ENCODE measurements at regions of chr2 and their contacts with region 1.

Region 1: GRCh38 chr2:207334624-207335371 is 169.1 kb upstream of the KLF7 start:
- DNase-seq: no peak
- H3K4me3 Mint-ChIP-seq: peak overlapping the region; percentile 26
- H3K27ac Mint-ChIP-seq: peak overlapping the region; percentile 93
- H3K4me1 Mint-ChIP-seq: peaks cover 74% of the 10 kb centered on the region
- H3K27me3 Mint-ChIP-seq: no peaks in the 10 kb centered on the region

Region 2: GRCh38 chr2:207223051-207223450 is 111.7 kb before region 1 on chr2:
- intact Hi-C with region 1: loop called (anchors 1 kb)
- DNase-seq: no peak
- H3K4me3 Mint-ChIP-seq: peak overlapping the region; percentile 23
- H3K27ac Mint-ChIP-seq: peak overlapping the region; percentile 57
- H3K4me1 Mint-ChIP-seq: peaks cover 45% of the 10 kb centered on the region
- H3K27me3 Mint-ChIP-seq: no peaks in the 10 kb centered on the region

Region 3: DNA sequence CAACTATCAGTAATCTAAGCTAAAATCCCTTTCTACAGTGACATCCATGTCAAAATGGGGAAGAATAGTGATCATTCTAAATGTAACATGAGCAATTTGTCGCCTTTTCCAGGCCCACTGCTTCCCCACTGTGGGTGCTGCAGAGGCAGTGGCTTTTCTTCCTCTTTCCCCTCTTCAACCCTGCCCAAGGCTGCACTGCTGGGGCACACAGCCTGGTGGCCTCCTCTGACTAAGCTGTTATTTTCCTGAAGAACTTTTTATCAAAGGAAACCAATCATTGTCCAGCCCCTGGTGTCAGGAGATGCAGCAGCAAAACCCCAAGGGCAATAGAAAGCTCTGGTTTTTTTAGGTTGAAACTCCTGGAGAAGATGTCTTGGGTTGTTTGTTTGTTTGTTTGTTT is 51.4 kb before region 1 on chr2:
- intact Hi-C with region 1: loop called (anchors 1 kb)
- DNase-seq: no peak
- H3K4me3 Mint-ChIP-seq: peak overlapping the region; percentile 55
- H3K27ac Mint-ChIP-seq: peak overlapping the region; percentile 82
- H3K4me1 Mint-ChIP-seq: peaks cover 67% of the 10 kb centered on the region
- H3K27me3 Mint-ChIP-seq: no peaks in the 10 kb centered on the region

Region 4: DNA sequence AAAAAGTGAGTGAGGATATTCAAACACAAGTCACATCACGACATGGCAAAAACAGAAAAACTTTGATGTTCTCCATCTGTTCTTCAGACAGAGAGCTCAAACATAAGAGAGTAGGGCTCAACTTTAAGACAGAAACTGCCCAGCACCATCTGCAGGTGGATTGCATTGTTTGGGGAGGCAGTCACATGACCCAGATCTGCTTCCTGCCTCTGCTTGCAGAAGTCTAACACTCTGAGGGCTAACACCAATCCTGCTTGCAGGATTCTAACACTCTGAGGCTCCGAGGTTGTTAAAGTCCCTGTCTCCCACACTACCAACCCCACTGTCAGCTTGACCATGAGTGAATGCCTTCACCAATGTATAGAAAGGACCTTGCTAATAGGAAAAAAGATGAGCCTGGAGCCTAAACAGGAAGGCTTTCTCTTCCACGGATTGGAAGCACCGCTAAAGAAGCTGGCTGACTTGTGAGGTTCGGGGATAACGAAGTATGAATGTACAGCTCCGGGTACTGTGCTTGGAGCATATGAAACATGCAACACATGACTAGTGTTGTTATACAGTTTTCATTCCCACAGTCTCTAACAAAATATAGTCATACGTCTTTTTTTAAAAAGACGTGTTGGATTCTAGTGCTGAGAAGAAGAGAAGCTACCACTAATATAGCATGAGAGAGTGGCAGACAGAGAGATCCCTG is 18.3 kb after region 1 on chr2:
- intact Hi-C with region 1: loop called (anchors 2 kb)
- DNase-seq: peak; percentile 30
- H3K4me3 Mint-ChIP-seq: no peak overlapping the region
- H3K27ac Mint-ChIP-seq: no peak overlapping the region
- H3K4me1 Mint-ChIP-seq: peaks cover 9% of the 10 kb centered on the region
- H3K27me3 Mint-ChIP-seq: no peaks in the 10 kb centered on the region

Region 5: DNA sequence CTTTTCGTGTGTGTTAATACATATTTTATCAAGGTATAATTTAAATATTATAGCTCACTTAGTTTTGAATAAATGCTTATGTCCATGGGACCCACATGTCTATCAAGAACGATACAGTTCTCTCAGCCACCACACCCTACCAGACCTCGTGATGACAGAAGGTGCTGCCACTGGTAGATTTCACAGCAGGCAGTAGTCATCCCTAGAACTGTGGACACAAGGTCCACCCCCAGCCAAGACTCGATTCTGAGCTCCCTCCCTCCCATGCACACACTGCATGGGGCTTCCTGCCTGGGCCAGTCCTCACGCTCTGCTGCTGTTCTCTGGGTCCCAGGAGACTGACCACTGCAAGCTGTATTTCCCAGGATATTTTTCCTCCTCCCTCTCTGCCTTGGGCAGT is 168.4 kb after region 1 on chr2:
- intact Hi-C with region 1: loop called (anchors 1 kb)
- DNase-seq: no peak
- H3K4me3 Mint-ChIP-seq: no peak overlapping the region
- H3K27ac Mint-ChIP-seq: no peak overlapping the region
- H3K4me1 Mint-ChIP-seq: peaks cover 67% of the 10 kb centered on the region
- H3K27me3 Mint-ChIP-seq: no peaks in the 10 kb centered on the region

Region 6: DNA sequence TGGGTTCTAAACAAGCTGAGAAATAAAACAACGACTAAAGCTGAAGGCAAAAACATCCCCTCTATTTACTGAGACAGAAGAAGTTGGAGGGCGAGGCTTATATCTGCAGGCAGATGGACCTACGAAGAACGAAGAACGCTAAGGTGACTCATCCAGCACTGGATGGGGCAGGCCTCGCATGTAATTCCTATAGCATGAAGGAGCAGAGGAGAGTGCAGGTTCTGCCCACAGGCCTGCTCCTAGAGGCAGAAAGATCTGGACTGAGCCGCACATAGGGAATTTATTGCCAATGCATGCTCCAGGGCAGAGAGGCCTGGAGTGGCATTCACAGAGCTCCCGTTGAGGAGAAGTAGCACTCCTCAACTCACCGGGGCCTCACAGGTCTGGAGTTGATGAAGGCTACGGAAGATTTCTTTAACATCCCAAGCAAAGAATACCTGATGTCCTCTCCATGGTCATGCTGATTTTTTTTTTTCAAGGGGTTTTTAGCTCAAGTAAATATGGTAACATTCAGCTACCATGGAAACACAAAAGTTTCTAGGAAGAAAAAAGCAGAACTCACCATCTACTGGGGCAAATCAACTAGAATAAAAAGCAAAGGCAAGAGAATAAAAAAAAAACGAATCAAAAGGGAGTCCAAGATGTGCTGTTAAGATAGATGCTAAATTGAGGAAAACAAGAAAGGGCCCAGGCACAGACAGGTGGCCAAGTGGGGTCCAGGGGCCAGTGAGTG is 300.8 kb after region 1 on chr2:
- intact Hi-C with region 1: no loop called
- DNase-seq: no peak
- H3K4me3 Mint-ChIP-seq: no peak overlapping the region
- H3K27ac Mint-ChIP-seq: no peak overlapping the region
- H3K4me1 Mint-ChIP-seq: peaks cover 9% of the 10 kb centered on the region
- H3K27me3 Mint-ChIP-seq: peaks cover 6% of the 10 kb centered on the region